CD8-positive, alpha-beta T cell (primary cell): ENCODE measurements at regions of chr17 and their contacts with region 1.

Region 1: GRCh38 chr17:64975329-64976087 is 56.2 kb upstream of the LRRC37A3 start:
- DNase-seq: peak; percentile 94 to 100 (median 97)
- ATAC-seq: peak; percentile 76
- H3K4me3 ChIP-seq: peak overlapping the region; percentile 68 to 71
- H3K4me3 Mint-ChIP-seq: peak overlapping the region; percentile 97
- H3K27ac ChIP-seq: peak overlapping the region; percentile 93 to 97
- H3K27ac Mint-ChIP-seq: peak overlapping the region; percentile 100
- H3K4me1 ChIP-seq: peaks cover 16% of the 10 kb centered on the region
- H3K4me1 Mint-ChIP-seq: peaks cover 37% of the 10 kb centered on the region
- H3K27me3 ChIP-seq: no peaks in the 10 kb centered on the region
- H3K27me3 Mint-ChIP-seq: no peaks in the 10 kb centered on the region
- CTCF ChIP-seq: no peak

Region 2: DNA sequence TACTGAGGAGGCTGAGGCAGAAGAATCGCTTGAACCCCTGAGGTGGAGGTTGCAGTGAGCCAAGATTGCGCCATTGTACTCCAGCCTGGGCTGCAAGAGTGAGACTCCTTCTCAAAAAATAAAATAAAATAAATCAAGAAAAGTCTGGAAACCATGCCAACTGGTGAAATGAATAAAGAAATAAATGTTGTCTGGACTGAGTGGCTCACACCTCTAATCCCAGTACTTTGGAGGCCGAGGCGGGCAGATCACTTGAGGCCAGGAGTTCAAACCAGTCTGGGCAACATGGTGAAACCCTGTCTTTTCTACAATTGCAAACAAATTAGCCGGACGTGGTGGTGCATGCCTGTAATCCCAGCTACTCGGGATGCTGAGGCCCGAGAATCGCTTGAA is 55.5 kb before region 1 on chr17:
- CTCF ChIA-PET with region 1: no interaction called
- POLR2A ChIA-PET with region 1: interaction called, 8 read pairs
- intact Hi-C with region 1: loop called in 1 of 2 experiments (anchors 2 kb)
- DNase-seq: peak in 3 of 9 experiments; percentile 23 to 47 (median 25)
- ATAC-seq: no peak
- H3K4me3 ChIP-seq: peak overlapping the region; percentile 59 to 73
- H3K4me3 Mint-ChIP-seq: peak overlapping the region; percentile 88
- H3K27ac ChIP-seq: peak overlapping the region; percentile 63 to 72
- H3K27ac Mint-ChIP-seq: peak overlapping the region; percentile 92
- H3K4me1 ChIP-seq: peaks cover 4% of the 10 kb centered on the region
- H3K4me1 Mint-ChIP-seq: peaks cover 3% of the 10 kb centered on the region
- H3K27me3 ChIP-seq: no peaks in the 10 kb centered on the region
- H3K27me3 Mint-ChIP-seq: no peaks in the 10 kb centered on the region
- CTCF ChIP-seq: no peak

Region 3: GRCh38 chr17:64940055-64940454 is 35.5 kb before region 1 on chr17:
- CTCF ChIA-PET with region 1: no interaction called
- POLR2A ChIA-PET with region 1: no interaction called
- intact Hi-C with region 1: no loop called
- DNase-seq: no peak
- ATAC-seq: no peak
- H3K4me3 ChIP-seq: no peak overlapping the region
- H3K4me3 Mint-ChIP-seq: no peak overlapping the region
- H3K27ac ChIP-seq: no peak overlapping the region
- H3K27ac Mint-ChIP-seq: no peak overlapping the region
- H3K4me1 ChIP-seq: no peaks in the 10 kb centered on the region
- H3K4me1 Mint-ChIP-seq: peaks cover 4% of the 10 kb centered on the region
- H3K27me3 ChIP-seq: peaks cover 0 to 2% of the 10 kb centered on the region in 2 experiments
- H3K27me3 Mint-ChIP-seq: no peaks in the 10 kb centered on the region
- CTCF ChIP-seq: no peak

Region 4: DNA sequence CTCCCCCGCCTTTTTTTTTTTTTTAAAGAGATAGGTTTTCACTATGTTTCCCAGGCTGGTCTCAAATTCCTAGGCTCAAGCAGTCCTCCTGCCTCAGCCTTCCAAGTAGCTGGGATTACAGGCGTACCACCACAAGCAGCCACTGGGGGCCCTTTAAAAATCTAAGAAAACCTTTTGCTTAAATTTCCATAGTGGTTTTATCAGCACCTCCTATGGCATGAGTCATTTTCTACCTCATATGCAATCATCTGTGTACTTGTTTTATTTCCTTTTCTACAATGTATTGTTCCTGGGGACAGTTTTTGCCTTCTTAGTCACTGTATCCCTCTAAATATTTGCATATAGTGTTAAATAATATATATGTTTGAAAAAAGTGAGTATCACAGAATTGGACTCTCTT is 51.8 kb after region 1 on chr17:
- CTCF ChIA-PET with region 1: no interaction called
- POLR2A ChIA-PET with region 1: no interaction called
- intact Hi-C with region 1: loop called in 1 of 2 experiments (anchors 2 kb)
- DNase-seq: peak in 5 of 9 experiments; percentile 49 to 80 (median 66)
- ATAC-seq: peak; percentile 81
- H3K4me3 ChIP-seq: no peak overlapping the region
- H3K4me3 Mint-ChIP-seq: peak overlapping the region; percentile 45
- H3K27ac ChIP-seq: peak overlapping the region in 1 of 2 experiments; percentile 55
- H3K27ac Mint-ChIP-seq: peak overlapping the region; percentile 75
- H3K4me1 ChIP-seq: peaks cover 63% of the 10 kb centered on the region
- H3K4me1 Mint-ChIP-seq: peaks cover 87% of the 10 kb centered on the region
- H3K27me3 ChIP-seq: no peaks in the 10 kb centered on the region
- H3K27me3 Mint-ChIP-seq: no peaks in the 10 kb centered on the region
- CTCF ChIP-seq: peak; percentile 59

Region 5: GRCh38 chr17:65039336-65039988 is 64.0 kb after region 1 on chr17:
- CTCF ChIA-PET with region 1: no interaction called
- POLR2A ChIA-PET with region 1: interaction called, 11 read pairs
- intact Hi-C with region 1: loop called in 1 of 2 experiments (anchors 5 kb)
- DNase-seq: peak in 7 of 9 experiments; percentile 41 to 92 (median 61)
- ATAC-seq: peak; percentile 89
- H3K4me3 ChIP-seq: peak overlapping the region; percentile 3 to 10
- H3K4me3 Mint-ChIP-seq: peak overlapping the region; percentile 74
- H3K27ac ChIP-seq: peak overlapping the region; percentile 57 to 85
- H3K27ac Mint-ChIP-seq: peak overlapping the region; percentile 96
- H3K4me1 ChIP-seq: peaks cover 86% of the 10 kb centered on the region
- H3K4me1 Mint-ChIP-seq: peaks cover 85% of the 10 kb centered on the region
- H3K27me3 ChIP-seq: no peaks in the 10 kb centered on the region
- H3K27me3 Mint-ChIP-seq: no peaks in the 10 kb centered on the region
- CTCF ChIP-seq: no peak

Region 6: GRCh38 chr17:65122836-65123756 is 147.6 kb after region 1 on chr17:
- CTCF ChIA-PET with region 1: no interaction called
- POLR2A ChIA-PET with region 1: no interaction called
- intact Hi-C with region 1: loop called in 1 of 2 experiments (anchors 5 kb)
- DNase-seq: peak; percentile 70 to 94 (median 81)
- ATAC-seq: peak; percentile 96
- H3K4me3 ChIP-seq: peak overlapping the region; percentile 40 to 70
- H3K4me3 Mint-ChIP-seq: peak overlapping the region; percentile 87
- H3K27ac ChIP-seq: peak overlapping the region; percentile 46 to 82
- H3K27ac Mint-ChIP-seq: peak overlapping the region; percentile 98
- H3K4me1 ChIP-seq: peaks cover 6% of the 10 kb centered on the region
- H3K4me1 Mint-ChIP-seq: peaks cover 14% of the 10 kb centered on the region
- H3K27me3 ChIP-seq: no peaks in the 10 kb centered on the region
- H3K27me3 Mint-ChIP-seq: peaks cover 5% of the 10 kb centered on the region
- CTCF ChIP-seq: no peak

Region 7: DNA sequence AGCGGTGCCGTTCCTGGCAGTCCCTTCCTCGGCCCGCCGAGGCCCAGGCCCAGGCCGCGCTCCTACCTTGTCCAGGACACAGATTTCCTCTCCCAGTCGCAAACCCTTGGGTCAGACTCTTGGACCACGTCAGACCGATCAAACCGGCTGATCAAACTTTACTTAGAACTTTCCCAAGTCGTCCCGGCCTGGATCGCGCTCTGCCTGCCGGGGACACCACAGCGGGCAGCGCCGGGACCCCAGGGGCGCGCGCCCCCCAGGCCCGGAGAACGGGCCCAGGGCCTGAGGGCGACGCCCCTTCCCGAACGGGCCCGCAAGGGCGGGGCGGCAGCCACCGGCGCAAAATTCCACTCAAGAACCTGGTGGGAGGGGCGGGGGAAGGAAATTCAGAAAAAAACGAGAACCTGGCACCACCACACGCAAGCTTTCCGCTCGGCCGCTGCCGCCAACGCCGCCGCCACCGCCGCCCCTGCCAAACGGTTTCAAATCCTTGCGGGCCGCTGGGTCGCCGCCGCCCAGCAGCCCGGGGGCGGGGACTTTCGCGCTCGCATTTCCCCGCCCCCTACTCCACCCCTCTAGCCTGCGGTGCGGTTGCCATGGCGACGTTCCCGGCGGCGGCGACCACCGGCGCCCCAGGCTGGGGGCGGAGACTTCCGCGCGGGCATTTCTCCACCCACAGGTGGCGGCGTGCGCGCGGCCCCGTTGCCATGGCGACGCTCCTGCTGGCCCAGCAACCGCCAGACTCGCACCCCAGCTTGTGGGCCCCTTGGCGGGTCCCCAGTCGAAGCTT is 1216.3 kb after region 1 on chr17 and contains the start of gene CEP112:
- CTCF ChIA-PET with region 1: no interaction called
- POLR2A ChIA-PET with region 1: no interaction called
- intact Hi-C with region 1: loop called in 1 of 2 experiments (anchors 5 kb)
- DNase-seq: peak; percentile 84 to 99 (median 92)
- ATAC-seq: peak; percentile 86
- H3K4me3 ChIP-seq: peak within 1 kb of the TSS; percentile 58 to 76
- H3K4me3 Mint-ChIP-seq: peak within 1 kb of the TSS; percentile 84
- H3K27ac ChIP-seq: peak within 1 kb of the TSS; percentile 58 to 76
- H3K27ac Mint-ChIP-seq: peak within 1 kb of the TSS; percentile 83
- H3K4me1 ChIP-seq: peaks cover 14% of the 10 kb centered on the region
- H3K4me1 Mint-ChIP-seq: peaks cover 15% of the 10 kb centered on the region
- H3K27me3 ChIP-seq: no peaks in the 10 kb centered on the region
- H3K27me3 Mint-ChIP-seq: no peaks in the 10 kb centered on the region
- CTCF ChIP-seq: no peak
- total RNA-seq, gene CEP112: 0.28 to 1.5 TPM